ENCODE measurements at regions of chr2 and their contacts with region 1.

Region 1: DNA sequence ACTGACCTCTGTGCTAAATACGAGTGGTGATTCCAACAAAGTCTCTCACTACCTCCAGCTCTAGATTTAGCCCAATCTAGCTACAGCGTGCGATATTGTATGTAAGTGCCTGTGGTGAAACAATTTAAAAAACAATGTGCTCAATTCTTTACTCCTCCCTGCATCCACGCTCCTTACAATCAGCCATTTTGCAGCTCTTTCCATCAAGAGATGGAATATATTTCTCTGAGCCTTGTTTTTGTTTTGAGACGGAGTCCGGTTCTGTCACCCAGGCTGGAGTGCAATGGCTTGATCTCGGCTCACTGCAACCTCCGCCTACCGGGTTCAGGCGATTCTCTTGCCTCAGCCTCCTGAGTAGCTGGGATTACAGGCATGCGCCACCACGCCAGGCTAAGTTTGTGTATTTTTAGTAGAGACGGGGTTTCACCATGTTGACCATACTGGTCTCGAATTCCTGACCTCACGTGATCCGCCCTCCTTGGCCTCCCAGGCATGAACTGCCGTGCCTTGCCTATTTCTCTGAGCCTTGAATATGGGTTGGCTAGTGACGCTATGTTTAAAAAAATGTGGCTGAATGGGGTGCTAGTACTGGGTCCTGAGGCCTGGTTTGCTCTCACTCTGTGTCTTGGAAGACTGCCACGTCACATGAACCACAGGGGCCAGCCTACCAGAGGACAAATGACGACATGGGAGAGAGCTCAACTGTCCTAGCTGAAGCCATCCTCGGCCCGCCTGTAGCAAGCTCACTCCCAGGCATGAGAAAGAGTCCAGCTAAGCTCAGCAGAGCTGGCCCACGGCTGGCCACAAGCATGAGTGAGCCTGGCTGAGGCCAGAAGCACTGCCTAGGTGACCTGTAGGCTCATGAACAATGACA is 14.8 kb downstream of the WDFY1 start:
- DNase-seq: peak; percentile 67 to 91
- ATAC-seq: peak; percentile 86 to 95
- H3K4me3 ChIP-seq: no peak overlapping the region
- H3K27ac ChIP-seq: peak overlapping the region; percentile 66 to 80 (median 75)
- H3K4me1 ChIP-seq: peaks cover 47 to 54% of the 10 kb centered on the region in 2 donors
- H3K27me3 ChIP-seq: no peaks in the 10 kb centered on the region
- CTCF ChIP-seq: no peak
- POLR2A ChIP-seq: peak; percentile 42 to 46

Region 2: DNA sequence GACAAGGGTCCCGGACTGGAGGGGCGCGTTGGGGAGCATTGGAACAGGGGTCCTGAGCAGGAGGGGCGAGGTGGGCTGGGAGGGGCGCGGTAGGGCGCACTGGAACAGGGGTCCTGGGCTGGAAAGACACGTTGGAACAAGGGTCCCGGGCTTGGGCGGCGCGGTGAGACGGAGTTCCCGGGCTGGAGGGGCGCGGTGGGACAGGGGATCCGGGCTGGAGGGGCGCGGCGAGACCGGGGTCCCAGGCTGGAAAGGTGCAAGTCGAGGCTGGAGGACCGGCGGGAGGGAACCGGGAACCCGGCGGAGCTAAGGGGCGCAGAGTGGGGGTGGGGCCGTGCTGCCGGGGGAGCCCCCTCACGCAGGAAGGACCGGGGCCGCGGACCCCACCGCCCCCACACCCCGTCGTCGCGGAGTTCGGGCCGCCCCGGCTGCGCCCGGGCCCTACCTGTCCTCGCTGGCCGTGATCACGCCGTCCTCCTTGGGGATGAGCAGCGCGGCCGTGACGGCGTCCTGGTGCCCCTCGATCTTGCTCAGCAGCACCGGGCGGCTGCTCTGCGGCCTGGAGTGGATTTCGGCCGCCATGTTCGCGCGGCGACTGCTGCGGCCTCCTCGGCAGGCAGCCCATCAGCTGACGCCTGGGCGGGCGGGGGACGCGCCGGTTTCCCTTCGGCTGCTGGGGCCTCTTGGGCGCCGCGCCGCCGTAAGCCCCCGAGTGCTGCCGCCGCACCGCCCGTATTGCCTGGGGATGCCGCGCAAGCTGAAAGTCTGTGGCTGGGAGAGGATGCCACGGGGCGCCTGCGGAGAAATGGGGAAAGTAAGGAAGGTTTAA is 14.6 kb after region 1 on chr2 and contains the start of gene WDFY1:
- in situ Hi-C with region 1: no loop called
- intact Hi-C with region 1: loop called (anchors 2 kb)
- DNase-seq: peak; percentile 75 to 83
- ATAC-seq: peak; percentile 74 to 91
- H3K4me3 ChIP-seq: peak within 1 kb of the TSS; percentile 77 to 92 (median 86)
- H3K27ac ChIP-seq: peak within 1 kb of the TSS; percentile 89 to 97 (median 92)
- H3K4me1 ChIP-seq: peaks cover 20 to 27% of the 10 kb centered on the region in 2 donors
- H3K27me3 ChIP-seq: no peaks in the 10 kb centered on the region
- CTCF ChIP-seq: peak in 2 of 5 experiments; percentile 12 to 13
- POLR2A ChIP-seq: peak; percentile 80 to 93
- total RNA-seq, gene WDFY1: 12.0 to 25.7 (median 17.1) TPM